Natural killer cell (primary cell): ENCODE measurements at regions of chr1 and their contacts with region 1.

Region 1: GRCh38 chr1:245045087-245045881 is 109.5 kb upstream of the KIF26B start:
- DNase-seq: no peak
- ATAC-seq: no peak
- H3K4me3 ChIP-seq: no peak overlapping the region
- H3K4me3 Mint-ChIP-seq: no peak overlapping the region
- H3K27ac ChIP-seq: no peak overlapping the region
- H3K27ac Mint-ChIP-seq: no peak overlapping the region
- H3K4me1 ChIP-seq: no peaks in the 10 kb centered on the region
- H3K4me1 Mint-ChIP-seq: no peaks in the 10 kb centered on the region
- H3K27me3 ChIP-seq: no peaks in the 10 kb centered on the region
- H3K27me3 Mint-ChIP-seq: no peaks in the 10 kb centered on the region
- CTCF ChIP-seq: no peak

Region 2: GRCh38 chr1:244603498-244603897 is 441.8 kb before region 1 on chr1:
- intact Hi-C with region 1: loop called (anchors 1 kb)
- DNase-seq: peak in 1 of 2 donors; percentile 62
- ATAC-seq: peak; percentile 38 to 69 (median 63)
- H3K4me3 ChIP-seq: no peak overlapping the region
- H3K4me3 Mint-ChIP-seq: no peak overlapping the region
- H3K27ac ChIP-seq: no peak overlapping the region
- H3K27ac Mint-ChIP-seq: no peak overlapping the region
- H3K4me1 ChIP-seq: no peaks in the 10 kb centered on the region
- H3K4me1 Mint-ChIP-seq: no peaks in the 10 kb centered on the region
- H3K27me3 ChIP-seq: no peaks in the 10 kb centered on the region
- H3K27me3 Mint-ChIP-seq: peaks cover 8 to 18% of the 10 kb centered on the region in 2 donors
- CTCF ChIP-seq: peak; percentile 89

Region 3: GRCh38 chr1:244796718-244797406 is 248.4 kb before region 1 on chr1:
- intact Hi-C with region 1: loop called (anchors 1 kb)
- DNase-seq: peak; percentile 23 to 84
- ATAC-seq: peak; percentile 44 to 65 (median 64)
- H3K4me3 ChIP-seq: no peak overlapping the region
- H3K4me3 Mint-ChIP-seq: no peak overlapping the region
- H3K27ac ChIP-seq: no peak overlapping the region
- H3K27ac Mint-ChIP-seq: no peak overlapping the region
- H3K4me1 ChIP-seq: no peaks in the 10 kb centered on the region
- H3K4me1 Mint-ChIP-seq: peaks cover 0 to 4% of the 10 kb centered on the region in 2 donors
- H3K27me3 ChIP-seq: no peaks in the 10 kb centered on the region
- H3K27me3 Mint-ChIP-seq: peaks cover 2 to 6% of the 10 kb centered on the region in 2 donors
- CTCF ChIP-seq: peak; percentile 97

Region 4: GRCh38 chr1:244918421-244919319 is 126.6 kb before region 1 on chr1:
- intact Hi-C with region 1: loop called (anchors 5 kb)
- DNase-seq: peak; percentile 67 to 88
- ATAC-seq: peak; percentile 95 to 98 (median 98)
- H3K4me3 ChIP-seq: peak overlapping the region; percentile 44
- H3K4me3 Mint-ChIP-seq: peak overlapping the region; percentile 96
- H3K27ac ChIP-seq: no peak overlapping the region
- H3K27ac Mint-ChIP-seq: peak overlapping the region; percentile 56 to 93
- H3K4me1 ChIP-seq: peaks cover 9% of the 10 kb centered on the region
- H3K4me1 Mint-ChIP-seq: peaks cover 6 to 15% of the 10 kb centered on the region in 2 donors
- H3K27me3 ChIP-seq: no peaks in the 10 kb centered on the region
- H3K27me3 Mint-ChIP-seq: no peaks in the 10 kb centered on the region
- CTCF ChIP-seq: no peak

Region 5: GRCh38 chr1:244964112-244964971 is 80.9 kb before region 1 on chr1:
- intact Hi-C with region 1: no loop called
- DNase-seq: peak; percentile 34 to 45
- ATAC-seq: peak; percentile 73 to 86 (median 74)
- H3K4me3 ChIP-seq: no peak overlapping the region
- H3K4me3 Mint-ChIP-seq: peak overlapping the region; percentile 85
- H3K27ac ChIP-seq: peak overlapping the region; percentile 21
- H3K27ac Mint-ChIP-seq: peak overlapping the region; percentile 84
- H3K4me1 ChIP-seq: peaks cover 23% of the 10 kb centered on the region
- H3K4me1 Mint-ChIP-seq: peaks cover 22 to 23% of the 10 kb centered on the region in 2 donors
- H3K27me3 ChIP-seq: no peaks in the 10 kb centered on the region
- H3K27me3 Mint-ChIP-seq: no peaks in the 10 kb centered on the region
- CTCF ChIP-seq: no peak